SK-N-SH (cell line): ENCODE measurements at regions of chr6 and their contacts with region 1.

Region 1: DNA sequence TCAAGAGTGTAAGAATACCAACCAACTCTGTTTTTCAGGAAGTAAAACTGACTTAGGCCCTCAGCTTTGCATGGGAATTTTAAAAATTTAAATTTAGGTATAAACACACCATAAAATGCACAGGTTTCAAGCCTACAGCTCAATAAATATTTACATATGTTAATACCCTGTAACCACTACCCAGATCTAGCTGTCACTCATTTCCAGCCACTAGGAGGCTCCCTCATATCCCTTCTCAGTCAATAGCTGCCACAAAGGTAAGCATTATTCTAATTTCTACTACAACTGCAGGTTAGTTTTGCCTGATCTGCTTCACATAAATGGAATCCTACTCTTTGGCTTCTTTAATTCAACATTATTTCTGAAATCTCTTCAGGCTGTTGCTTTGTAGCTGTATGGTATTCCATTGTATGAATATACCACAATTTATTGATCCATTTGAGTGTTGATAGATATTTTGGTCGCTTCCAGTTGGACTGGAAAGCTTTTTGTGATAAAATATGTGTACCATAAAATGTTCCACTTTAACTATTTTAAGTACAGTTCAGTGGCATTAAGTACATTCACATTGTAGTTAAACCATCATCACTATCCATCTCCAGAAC is 32.5 kb upstream of the MEI4 start:
- DNase-seq: peak; percentile 9
- H3K4me3 ChIP-seq: no peak overlapping the region
- H3K27ac ChIP-seq: no peak overlapping the region
- H3K4me1 ChIP-seq: no peaks in the 10 kb centered on the region
- H3K27me3 ChIP-seq: no peaks in the 10 kb centered on the region
- CTCF ChIP-seq: peak; percentile 69
- EP300 ChIP-seq: no peak
- RAD21 ChIP-seq: peak; percentile 53

Region 2: GRCh38 chr6:78810146-78810545 is 1189.8 kb after region 1 on chr6:
- CTCF ChIA-PET with region 1: interaction called, 10 read pairs
- POLR2A ChIA-PET with region 1: no interaction called
- DNase-seq: peak; percentile 41
- H3K4me3 ChIP-seq: no peak overlapping the region; a peak in 1 of 4 replicates
- H3K27ac ChIP-seq: no peak overlapping the region
- H3K4me1 ChIP-seq: no peaks in the 10 kb centered on the region
- H3K27me3 ChIP-seq: no peaks in the 10 kb centered on the region; the same call in 1 of the 2 replicates
- CTCF ChIP-seq: peak; percentile 74
- EP300 ChIP-seq: no peak
- RAD21 ChIP-seq: peak; percentile 81